GM12878 (cell line): ENCODE measurements at regions of chr1 and their contacts with region 1.

Region 1: GRCh38 chr1:159040206-159040605 is 30.5 kb downstream of the IFI16 start:
- DNase-seq: no peak
- ATAC-seq: no peak
- H3K4me3 ChIP-seq: no peak overlapping the region
- H3K27ac ChIP-seq: no peak overlapping the region
- H3K4me1 ChIP-seq: no peaks in the 10 kb centered on the region
- H3K27me3 ChIP-seq: no peaks in the 10 kb centered on the region
- CTCF ChIP-seq: no peak
- EP300 ChIP-seq: no peak
- POLR2A ChIP-seq: no peak
- RAD21 ChIP-seq: no peak

Region 2: GRCh38 chr1:159023723-159024122 is 16.5 kb before region 1 on chr1:
- CTCF ChIA-PET with region 1: interaction called, 3 read pairs
- POLR2A ChIA-PET with region 1: interaction called, 3 read pairs
- RAD21 ChIA-PET with region 1: interaction called, 3 read pairs
- SMC1A ChIA-PET with region 1: interaction called, 15 read pairs
- in situ Hi-C with region 1: no loop called
- intact Hi-C with region 1: no loop called
- DNase-seq: no peak
- ATAC-seq: no peak
- H3K4me3 ChIP-seq: no peak overlapping the region
- H3K27ac ChIP-seq: no peak overlapping the region
- H3K4me1 ChIP-seq: no peaks in the 10 kb centered on the region; the same call in 1 of the 2 replicates
- H3K27me3 ChIP-seq: no peaks in the 10 kb centered on the region
- CTCF ChIP-seq: no peak
- EP300 ChIP-seq: no peak
- POLR2A ChIP-seq: no peak
- RAD21 ChIP-seq: no peak

Region 3: GRCh38 chr1:159282118-159282517 is 241.9 kb after region 1 on chr1:
- CTCF ChIA-PET with region 1: no interaction called
- POLR2A ChIA-PET with region 1: no interaction called
- RAD21 ChIA-PET with region 1: no interaction called
- SMC1A ChIA-PET with region 1: no interaction called
- in situ Hi-C with region 1: no loop called
- intact Hi-C with region 1: no loop called
- DNase-seq: no peak
- ATAC-seq: no peak
- H3K4me3 ChIP-seq: no peak overlapping the region
- H3K27ac ChIP-seq: no peak overlapping the region
- H3K4me1 ChIP-seq: no peaks in the 10 kb centered on the region
- H3K27me3 ChIP-seq: peaks cover 0 to 3% of the 10 kb centered on the region in 2 experiments; a peak in 1 of 4 replicates
- CTCF ChIP-seq: no peak
- EP300 ChIP-seq: no peak
- POLR2A ChIP-seq: no peak
- RAD21 ChIP-seq: no peak

Region 4: GRCh38 chr1:159700312-159700711 is 660.1 kb after region 1 on chr1:
- CTCF ChIA-PET with region 1: no interaction called
- POLR2A ChIA-PET with region 1: no interaction called
- RAD21 ChIA-PET with region 1: no interaction called
- SMC1A ChIA-PET with region 1: no interaction called
- in situ Hi-C with region 1: no loop called
- intact Hi-C with region 1: no loop called
- DNase-seq: no peak
- ATAC-seq: no peak
- H3K4me3 ChIP-seq: no peak overlapping the region
- H3K27ac ChIP-seq: no peak overlapping the region
- H3K4me1 ChIP-seq: no peaks in the 10 kb centered on the region
- H3K27me3 ChIP-seq: no peaks in the 10 kb centered on the region; a peak in 1 of 4 replicates
- CTCF ChIP-seq: no peak
- EP300 ChIP-seq: no peak
- POLR2A ChIP-seq: no peak
- RAD21 ChIP-seq: no peak